ENCODE measurements at regions of chr15 and their contacts with region 1.

Region 1: DNA sequence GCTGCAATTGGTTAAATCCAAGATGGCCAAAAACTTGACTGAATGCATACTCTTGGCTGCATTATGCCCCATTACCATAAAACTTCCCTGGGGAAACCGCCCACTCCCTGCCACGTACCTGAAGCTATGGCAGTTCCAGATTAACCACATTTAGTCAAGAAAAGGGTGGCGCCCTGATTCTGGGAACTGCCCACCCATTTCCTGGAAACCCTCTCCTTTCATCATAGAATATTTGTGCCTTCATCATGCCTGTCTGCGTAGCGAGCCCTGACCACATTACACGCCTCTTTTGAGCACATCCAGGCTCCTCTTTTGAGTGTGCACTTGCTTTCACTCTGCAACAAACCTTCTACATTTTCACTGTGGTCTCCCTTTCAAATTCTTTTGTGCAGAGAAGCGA is 5.2 kb downstream of the LINS1 start:
- DNase-seq: peak; percentile 99
- H3K4me3 Mint-ChIP-seq: peak overlapping the region; percentile 70
- H3K27ac Mint-ChIP-seq: no peak overlapping the region
- H3K4me1 Mint-ChIP-seq: peaks cover 65% of the 10 kb centered on the region
- H3K27me3 Mint-ChIP-seq: no peaks in the 10 kb centered on the region

Region 2: GRCh38 chr15:99250494-99251435 is 1346.0 kb before region 1 on chr15:
- CTCF ChIA-PET with region 1: no interaction called
- intact Hi-C with region 1: loop called (anchors 10 kb)
- DNase-seq: peak; percentile 99
- H3K4me3 Mint-ChIP-seq: peak overlapping the region; percentile 93
- H3K27ac Mint-ChIP-seq: peak overlapping the region; percentile 87
- H3K4me1 Mint-ChIP-seq: peaks cover 28% of the 10 kb centered on the region
- H3K27me3 Mint-ChIP-seq: no peaks in the 10 kb centered on the region

Region 3: GRCh38 chr15:99845009-99845408 is 751.8 kb before region 1 on chr15:
- CTCF ChIA-PET with region 1: no interaction called
- intact Hi-C with region 1: loop called (anchors 5 kb)
- DNase-seq: peak; percentile 66
- H3K4me3 Mint-ChIP-seq: no peak overlapping the region
- H3K27ac Mint-ChIP-seq: peak overlapping the region; percentile 62
- H3K4me1 Mint-ChIP-seq: peaks cover 57% of the 10 kb centered on the region
- H3K27me3 Mint-ChIP-seq: no peaks in the 10 kb centered on the region

Region 4: GRCh38 chr15:100553468-100553867 is 43.3 kb before region 1 on chr15:
- CTCF ChIA-PET with region 1: no interaction called
- intact Hi-C with region 1: no loop called
- DNase-seq: no peak
- H3K4me3 Mint-ChIP-seq: no peak overlapping the region
- H3K27ac Mint-ChIP-seq: no peak overlapping the region
- H3K4me1 Mint-ChIP-seq: no peaks in the 10 kb centered on the region
- H3K27me3 Mint-ChIP-seq: no peaks in the 10 kb centered on the region

Region 5: GRCh38 chr15:100580414-100580813 is 16.4 kb before region 1 on chr15:
- CTCF ChIA-PET with region 1: no interaction called
- intact Hi-C with region 1: loop called (anchors 1 kb)
- DNase-seq: peak; percentile 47
- H3K4me3 Mint-ChIP-seq: peak overlapping the region; percentile 47
- H3K27ac Mint-ChIP-seq: peak overlapping the region; percentile 90
- H3K4me1 Mint-ChIP-seq: peaks cover 64% of the 10 kb centered on the region
- H3K27me3 Mint-ChIP-seq: no peaks in the 10 kb centered on the region

Region 6: GRCh38 chr15:100801256-100801900 is 204.6 kb after region 1 on chr15:
- CTCF ChIA-PET with region 1: no interaction called
- intact Hi-C with region 1: no loop called
- DNase-seq: no peak
- H3K4me3 Mint-ChIP-seq: no peak overlapping the region
- H3K27ac Mint-ChIP-seq: no peak overlapping the region
- H3K4me1 Mint-ChIP-seq: no peaks in the 10 kb centered on the region
- H3K27me3 Mint-ChIP-seq: peaks cover 8% of the 10 kb centered on the region

Region 7: GRCh38 chr15:101127506-101128076 is 530.8 kb after region 1 on chr15:
- CTCF ChIA-PET with region 1: no interaction called
- intact Hi-C with region 1: loop called (anchors 5 kb)
- DNase-seq: peak; percentile 73
- H3K4me3 Mint-ChIP-seq: peak overlapping the region; percentile 53
- H3K27ac Mint-ChIP-seq: peak overlapping the region; percentile 94
- H3K4me1 Mint-ChIP-seq: peaks cover 53% of the 10 kb centered on the region
- H3K27me3 Mint-ChIP-seq: peaks cover 4% of the 10 kb centered on the region

Region 8: GRCh38 chr15:101242160-101242998 is 645.6 kb after region 1 on chr15:
- CTCF ChIA-PET with region 1: no interaction called
- intact Hi-C with region 1: loop called (anchors 5 kb)
- DNase-seq: peak; percentile 81
- H3K4me3 Mint-ChIP-seq: no peak overlapping the region
- H3K27ac Mint-ChIP-seq: peak overlapping the region; percentile 76
- H3K4me1 Mint-ChIP-seq: peaks cover 79% of the 10 kb centered on the region
- H3K27me3 Mint-ChIP-seq: no peaks in the 10 kb centered on the region

Measured in activated naive CD4-positive, alpha-beta T cell treated with anti-CD3 and anti-CD28 coated beads for 36 hours (primary cell).